ENCODE measurements at regions of chr11 and their contacts with region 1.

Region 1: GRCh38 chr11:111766093-111766833 is at the start of gene PPP2R1B:
- H3K4me3 Mint-ChIP-seq: peak within 1 kb of the TSS; percentile 99
- H3K27ac Mint-ChIP-seq: peak within 1 kb of the TSS; percentile 88
- H3K4me1 Mint-ChIP-seq: peaks cover 23% of the 10 kb centered on the region
- H3K27me3 Mint-ChIP-seq: peaks cover 6% of the 10 kb centered on the region

Region 2: DNA sequence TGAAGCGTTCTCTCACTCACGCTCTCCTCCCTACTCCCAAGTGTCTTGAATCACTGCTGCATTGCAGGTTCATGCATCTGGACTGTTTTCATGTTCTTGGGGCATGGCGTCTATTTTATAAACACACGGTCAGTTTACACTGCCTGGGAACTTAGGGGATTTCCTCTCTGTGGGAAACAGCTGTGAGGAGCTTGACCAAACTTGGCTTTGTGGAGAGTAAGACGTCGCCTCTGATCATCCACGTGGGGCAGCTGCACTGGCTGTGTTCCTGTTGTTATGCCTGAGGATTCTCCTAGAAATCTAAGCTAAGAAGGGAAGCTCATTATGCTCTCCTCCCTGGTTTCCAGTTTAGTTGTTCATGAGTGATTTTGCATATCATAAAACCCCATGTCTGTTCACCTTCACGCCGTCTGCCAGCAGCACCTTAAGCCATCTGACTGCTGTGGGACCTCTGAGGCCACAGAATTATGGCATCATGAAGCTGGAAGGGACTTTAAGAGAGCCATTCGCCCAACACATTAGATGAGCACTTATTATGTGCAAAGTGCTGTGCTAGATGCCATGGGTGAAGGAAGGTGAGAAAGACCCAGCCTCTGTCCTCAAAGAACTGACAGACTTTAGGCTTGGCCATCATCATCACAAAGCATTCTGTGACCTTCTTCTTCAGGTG is 348.4 kb before region 1 on chr11:
- intact Hi-C with region 1: no loop called
- H3K4me3 Mint-ChIP-seq: no peak overlapping the region
- H3K27ac Mint-ChIP-seq: no peak overlapping the region
- H3K4me1 Mint-ChIP-seq: peaks cover 26% of the 10 kb centered on the region
- H3K27me3 Mint-ChIP-seq: no peaks in the 10 kb centered on the region

Region 3: GRCh38 chr11:111601979-111602864 is 164.0 kb before region 1 on chr11 and contains the start of gene SIK2:
- intact Hi-C with region 1: loop called (anchors 1 kb)
- H3K4me3 Mint-ChIP-seq: peak within 1 kb of the TSS; percentile 89
- H3K27ac Mint-ChIP-seq: peak within 1 kb of the TSS; percentile 89
- H3K4me1 Mint-ChIP-seq: peaks cover 36% of the 10 kb centered on the region
- H3K27me3 Mint-ChIP-seq: no peaks in the 10 kb centered on the region

Region 4: DNA sequence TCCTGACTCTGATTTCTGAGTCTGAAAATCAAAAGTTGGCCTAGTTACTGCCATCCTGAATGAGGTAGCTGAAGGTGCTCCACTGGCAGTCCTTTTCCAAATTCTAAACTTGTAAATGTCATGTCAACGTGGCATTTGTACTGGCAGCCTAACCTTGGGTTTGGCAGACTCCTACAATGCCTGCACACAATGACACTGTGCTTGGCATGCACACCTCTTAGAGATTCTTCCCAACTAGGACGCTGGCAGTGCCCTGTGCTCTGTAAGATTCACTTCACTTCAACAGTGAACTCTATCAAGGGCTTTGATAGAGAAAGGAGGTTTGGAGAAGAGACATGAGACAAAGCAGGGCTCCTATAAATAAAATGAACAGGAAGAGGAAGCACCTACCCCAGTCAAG is 21.8 kb after region 1 on chr11:
- intact Hi-C with region 1: no loop called
- H3K4me3 Mint-ChIP-seq: no peak overlapping the region
- H3K27ac Mint-ChIP-seq: no peak overlapping the region
- H3K4me1 Mint-ChIP-seq: peaks cover 14% of the 10 kb centered on the region
- H3K27me3 Mint-ChIP-seq: no peaks in the 10 kb centered on the region

Region 5: GRCh38 chr11:111911563-111912401 is 145.5 kb after region 1 on chr11 and contains the start of gene CRYAB:
- intact Hi-C with region 1: no loop called
- H3K4me3 Mint-ChIP-seq: no peak within 1 kb of the TSS
- H3K27ac Mint-ChIP-seq: no peak within 1 kb of the TSS
- H3K4me1 Mint-ChIP-seq: no peaks in the 10 kb centered on the region
- H3K27me3 Mint-ChIP-seq: peaks cover 59% of the 10 kb centered on the region